SK-N-SH (cell line): ENCODE measurements at regions of chr19 and their contacts with region 1.

Region 1: DNA sequence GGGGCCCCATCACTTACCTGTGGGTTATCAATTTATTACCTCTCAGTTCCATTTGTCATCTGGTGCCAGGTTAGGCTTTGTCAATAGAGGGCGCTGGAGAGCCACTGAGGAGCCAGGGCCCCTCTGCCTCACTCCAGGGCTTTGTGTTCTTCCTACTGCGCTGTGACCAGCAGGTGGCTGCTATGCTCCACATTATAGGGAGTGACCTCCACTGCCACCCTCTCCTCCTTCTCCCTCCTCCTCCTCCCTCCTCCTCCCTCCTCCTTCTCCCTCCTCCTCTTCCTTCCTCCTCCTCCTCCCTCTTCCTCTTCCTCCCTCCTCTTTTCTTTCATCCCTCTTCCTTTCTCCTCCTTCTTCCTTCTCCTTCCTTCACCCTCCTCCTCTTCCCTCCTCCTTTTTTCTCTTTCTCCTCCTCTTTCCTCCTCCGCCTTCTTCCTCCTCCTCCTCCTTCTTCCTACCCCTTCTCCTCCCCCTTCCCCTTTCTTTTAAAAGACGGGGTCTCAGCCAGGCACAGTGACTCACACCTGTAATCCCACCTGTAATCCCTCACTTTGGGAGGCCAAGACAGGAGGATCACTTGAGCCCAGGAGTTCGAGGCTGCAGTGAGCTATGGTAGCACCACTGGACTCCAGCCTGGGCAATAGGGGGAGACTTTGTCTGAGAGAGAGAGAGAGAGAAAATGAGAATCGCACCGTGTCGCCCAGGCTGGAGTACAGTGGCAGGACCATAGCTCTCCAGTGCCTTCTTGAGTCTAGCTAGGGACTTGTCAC is 10.3 kb upstream of the ZBTB32 start:
- DNase-seq: peak; percentile 90
- H3K4me3 ChIP-seq: no peak overlapping the region; a peak in 1 of 4 replicates
- H3K27ac ChIP-seq: no peak overlapping the region
- H3K4me1 ChIP-seq: no peaks in the 10 kb centered on the region
- H3K27me3 ChIP-seq: peaks cover 7% of the 10 kb centered on the region; the same call in 1 of the 2 replicates
- CTCF ChIP-seq: peak; percentile 98
- EP300 ChIP-seq: no peak
- RAD21 ChIP-seq: peak; percentile 92

Region 2: GRCh38 chr19:35673121-35673804 is 20.8 kb before region 1 on chr19:
- CTCF ChIA-PET with region 1: interaction called, 10 read pairs
- POLR2A ChIA-PET with region 1: no interaction called
- DNase-seq: peak; percentile 84
- H3K4me3 ChIP-seq: peak overlapping the region; percentile 40 to 65
- H3K27ac ChIP-seq: no peak overlapping the region
- H3K4me1 ChIP-seq: no peaks in the 10 kb centered on the region; a peak in 1 of 4 replicates
- H3K27me3 ChIP-seq: peaks cover 47% of the 10 kb centered on the region; the same call in 1 of the 2 replicates
- CTCF ChIP-seq: no peak
- EP300 ChIP-seq: no peak
- RAD21 ChIP-seq: no peak

Region 3: DNA sequence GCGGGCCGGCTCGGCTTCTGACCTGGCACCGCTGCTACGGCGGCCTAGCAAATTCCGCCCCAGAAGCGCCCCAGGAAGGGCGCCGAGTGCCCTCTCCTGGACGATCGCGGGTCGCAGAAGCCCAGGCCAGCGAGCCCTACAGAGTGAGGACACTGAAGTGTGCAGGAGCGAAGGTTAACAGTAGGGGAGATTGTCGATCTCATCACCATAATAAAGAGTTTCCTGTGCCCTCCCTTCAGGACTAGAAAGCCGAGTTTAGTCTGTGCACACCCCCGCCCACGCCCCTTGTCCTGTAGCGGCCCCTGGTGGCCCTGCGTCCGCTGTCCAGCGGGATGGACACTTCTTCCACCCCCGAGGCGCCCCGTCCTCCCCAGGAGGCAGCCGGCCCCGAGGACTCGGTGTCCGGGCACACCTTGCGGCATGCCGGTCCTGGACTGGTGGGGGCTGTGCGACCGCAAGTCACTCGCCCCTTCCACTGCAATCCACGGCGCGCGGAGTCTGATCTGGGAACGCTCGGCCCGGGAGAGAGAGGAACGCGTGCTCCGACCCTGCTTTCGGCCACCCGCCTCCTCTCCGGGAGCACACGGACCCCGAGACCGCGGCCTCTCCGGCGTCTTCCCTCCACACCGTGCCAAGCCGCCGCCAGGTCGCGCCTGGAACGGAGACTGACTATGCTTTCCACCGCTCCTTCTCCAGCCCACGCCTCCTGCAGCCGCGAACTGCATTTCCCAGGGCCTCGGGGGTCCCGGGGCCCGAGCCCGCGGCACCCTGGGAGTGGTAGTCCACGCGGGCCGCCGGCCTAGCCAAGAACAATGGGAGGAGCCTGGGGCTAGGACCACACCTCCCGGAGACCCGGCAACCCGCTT is 23.0 kb after region 1 on chr19:
- CTCF ChIA-PET with region 1: interaction called, 14 read pairs
- POLR2A ChIA-PET with region 1: no interaction called
- DNase-seq: peak; percentile 98
- H3K4me3 ChIP-seq: peak overlapping the region; percentile 80 to 91
- H3K27ac ChIP-seq: peak overlapping the region; percentile 62 to 95
- H3K4me1 ChIP-seq: peaks cover 5 to 24% of the 10 kb centered on the region in 2 experiments; a peak in 3 of 4 replicates
- H3K27me3 ChIP-seq: no peaks in the 10 kb centered on the region
- CTCF ChIP-seq: peak; percentile 98
- EP300 ChIP-seq: no peak
- RAD21 ChIP-seq: peak; percentile 74